ENCODE measurements at regions of chr10 and their contacts with region 1.

Region 1: DNA sequence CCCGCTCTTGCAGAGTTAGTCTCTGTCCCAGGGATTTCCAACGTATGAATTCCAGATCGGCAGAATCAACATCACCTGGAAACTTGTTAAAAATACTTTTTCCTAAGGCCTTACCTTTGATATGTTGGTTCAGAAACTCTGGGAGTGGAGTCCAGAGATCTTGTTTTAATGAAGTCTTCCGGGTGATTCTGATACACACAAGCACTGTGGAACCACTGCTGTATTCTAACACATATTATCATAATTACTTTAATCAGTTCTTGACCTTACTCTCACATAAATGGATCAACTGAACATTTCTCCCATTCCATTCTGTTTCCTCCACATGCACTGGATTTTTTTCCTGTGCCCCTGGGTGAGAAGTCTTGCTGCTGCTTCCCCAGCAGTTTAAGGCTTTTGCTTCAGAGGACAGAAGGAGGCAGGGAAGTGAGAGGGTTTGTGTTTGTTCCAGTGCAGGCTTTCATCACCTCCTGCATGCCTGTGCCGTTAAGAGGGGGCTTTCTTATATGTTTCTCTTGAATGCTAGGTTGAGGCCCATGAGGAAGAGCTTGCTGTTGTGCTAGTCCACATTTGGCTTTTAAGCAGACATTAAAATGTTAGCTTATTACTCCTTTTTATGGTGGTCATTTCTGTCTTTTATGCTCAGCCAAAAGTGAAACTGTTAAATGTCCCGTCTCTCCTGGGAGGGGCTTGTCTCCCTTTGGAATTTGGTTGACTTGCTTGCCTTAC is 32.4 kb downstream of the CCSER2 start:
- DNase-seq: no peak
- H3K4me3 ChIP-seq: no peak overlapping the region; the same call in 1 of the 2 replicates
- H3K4me3 Mint-ChIP-seq: peak overlapping the region; percentile 22
- H3K27ac Mint-ChIP-seq: no peak overlapping the region
- H3K4me1 ChIP-seq: 0 out of 2 replicates have a peak, but pooled peaks cover 6% of the 10 kb centered on the region
- H3K4me1 Mint-ChIP-seq: peaks cover 15% of the 10 kb centered on the region
- H3K27me3 ChIP-seq: no peaks in the 10 kb centered on the region
- H3K27me3 Mint-ChIP-seq: no peaks in the 10 kb centered on the region
- CTCF ChIP-seq: no peak

Region 2: GRCh38 chr10:84424731-84425167 is 63.9 kb after region 1 on chr10:
- CTCF ChIA-PET with region 1: no interaction called
- POLR2A ChIA-PET with region 1: no interaction called
- intact Hi-C with region 1: loop called (anchors 5 kb)
- DNase-seq: peak in 1 of 2 experiments; percentile 9
- H3K4me3 ChIP-seq: no peak overlapping the region
- H3K4me3 Mint-ChIP-seq: peak overlapping the region; percentile 4
- H3K27ac Mint-ChIP-seq: peak overlapping the region; percentile 5
- H3K4me1 ChIP-seq: no peaks in the 10 kb centered on the region
- H3K4me1 Mint-ChIP-seq: peaks cover 7% of the 10 kb centered on the region
- H3K27me3 ChIP-seq: no peaks in the 10 kb centered on the region
- H3K27me3 Mint-ChIP-seq: no peaks in the 10 kb centered on the region
- CTCF ChIP-seq: no peak

Region 3: DNA sequence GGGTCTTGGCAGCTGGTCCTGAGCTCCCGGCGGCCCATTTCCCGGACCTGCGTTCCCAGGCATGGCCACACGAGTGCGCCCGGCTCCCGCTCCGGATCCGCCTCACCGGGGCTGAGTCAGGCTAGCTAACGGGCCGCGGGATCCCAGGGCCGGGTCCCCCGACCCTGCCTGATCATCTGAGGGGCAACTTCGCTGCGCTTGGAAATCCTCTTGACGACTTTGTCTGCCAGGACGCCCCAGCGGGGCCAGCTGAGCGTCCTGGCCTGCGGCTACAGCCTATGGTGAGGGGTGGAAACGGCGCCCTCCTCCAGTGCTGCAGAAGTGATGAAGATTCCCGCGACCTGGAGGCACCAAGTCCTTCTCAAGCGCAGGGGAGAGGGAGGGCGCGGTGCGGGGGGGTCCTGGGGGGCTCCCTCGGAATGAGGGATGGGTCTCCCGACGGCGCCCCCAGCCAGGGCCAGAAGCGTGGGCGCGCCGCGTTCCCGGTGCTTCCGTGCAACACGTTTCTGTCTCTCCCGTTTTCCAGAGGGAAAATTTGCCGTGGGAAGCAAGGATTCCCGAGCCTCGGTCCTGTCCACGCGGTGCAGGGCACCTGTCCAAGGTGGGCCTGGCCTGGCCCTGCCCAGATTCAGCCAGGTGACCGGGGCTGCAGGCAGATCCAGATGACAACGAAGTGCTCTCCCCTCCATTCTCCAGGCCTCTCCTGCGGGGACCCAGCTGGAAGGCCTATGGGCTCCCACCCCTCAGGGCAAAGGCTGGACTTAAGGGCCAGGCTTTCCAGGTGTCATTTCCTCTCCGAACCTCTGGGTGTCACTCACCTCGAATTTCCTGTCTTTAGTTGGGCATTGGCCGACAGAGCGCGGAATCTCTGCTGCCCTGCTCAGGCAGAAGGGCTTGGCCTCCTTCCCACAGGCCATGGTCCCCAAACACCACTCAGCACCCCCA is 180.1 kb after region 1 on chr10:
- CTCF ChIA-PET with region 1: no interaction called
- POLR2A ChIA-PET with region 1: no interaction called
- intact Hi-C with region 1: no loop called
- DNase-seq: no peak
- H3K4me3 ChIP-seq: no peak overlapping the region
- H3K4me3 Mint-ChIP-seq: no peak overlapping the region
- H3K27ac Mint-ChIP-seq: no peak overlapping the region
- H3K4me1 ChIP-seq: no peaks in the 10 kb centered on the region
- H3K4me1 Mint-ChIP-seq: peaks cover 14% of the 10 kb centered on the region
- H3K27me3 ChIP-seq: no peaks in the 10 kb centered on the region
- H3K27me3 Mint-ChIP-seq: no peaks in the 10 kb centered on the region
- CTCF ChIP-seq: no peak